Astrocyte of the spinal cord (primary cell): ENCODE measurements at regions of chr6 and their contacts with region 1.

Region 1: GRCh38 chr6:149431905-149432775 is 32.1 kb downstream of the SUMO4 start:
- DNase-seq: peak; percentile 77
- H3K4me3 ChIP-seq: no peak overlapping the region
- CTCF ChIP-seq: peak; percentile 87

Region 2: DNA sequence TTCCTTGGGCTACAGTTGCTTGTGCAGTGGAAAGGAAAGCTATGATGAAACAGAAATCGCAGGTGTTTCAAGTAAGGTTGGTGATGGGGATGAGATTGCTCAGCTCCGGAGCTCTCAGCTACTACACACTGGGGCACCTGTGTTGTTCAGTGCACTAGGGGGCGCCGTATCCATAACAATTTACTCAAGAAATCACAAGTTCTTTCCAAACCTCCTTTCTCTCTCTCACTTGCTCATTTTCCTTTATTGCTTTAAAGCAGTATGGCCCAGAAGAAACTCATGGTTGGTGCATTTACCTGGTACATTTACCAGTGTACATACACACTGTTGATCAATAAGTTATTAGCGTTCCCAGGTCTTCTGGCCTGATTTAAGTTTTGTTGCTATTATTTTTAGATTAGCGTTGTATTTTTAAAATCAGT is 349.8 kb before region 1 on chr6:
- in situ Hi-C with region 1: loop called (anchors 25 kb)
- DNase-seq: peak; percentile 83
- H3K4me3 ChIP-seq: no peak overlapping the region
- CTCF ChIP-seq: peak; percentile 76